ENCODE measurements at regions of chr14 and their contacts with region 1.

Region 1: GRCh38 chr14:102316743-102317563 is 2.6 kb upstream of the ZNF839 start:
- DNase-seq: peak; percentile 86 to 93
- ATAC-seq: peak; percentile 65 to 82
- H3K4me3 ChIP-seq: peak overlapping the region; percentile 51
- H3K27ac ChIP-seq: peak overlapping the region; percentile 79 to 99
- H3K4me1 ChIP-seq: peaks cover 36% of the 10 kb centered on the region
- CTCF ChIP-seq: peak; percentile 68
- EP300 ChIP-seq: no peak; a peak in 1 of 5 replicates
- POLR2A ChIP-seq: no peak; the same call in 1 of the 2 replicates
- RAD21 ChIP-seq: peak in 1 of 2 experiments; percentile 11; a peak in 2 of 5 replicates

Region 2: GRCh38 chr14:102105369-102105768 is 211.6 kb before region 1 on chr14:
- CTCF ChIA-PET with region 1: interaction called, 11 read pairs
- POLR2A ChIA-PET with region 1: no interaction called
- DNase-seq: no peak
- ATAC-seq: peak in 1 of 2 experiments; percentile 22; a peak in 2 of 6 replicates
- H3K4me3 ChIP-seq: no peak overlapping the region
- H3K27ac ChIP-seq: no peak overlapping the region
- H3K4me1 ChIP-seq: no peaks in the 10 kb centered on the region
- CTCF ChIP-seq: no peak
- EP300 ChIP-seq: no peak
- POLR2A ChIP-seq: no peak
- RAD21 ChIP-seq: no peak

Region 3: GRCh38 chr14:102227184-102227964 is 89.6 kb before region 1 on chr14:
- CTCF ChIA-PET with region 1: interaction called, 52 read pairs
- POLR2A ChIA-PET with region 1: no interaction called
- DNase-seq: no peak
- ATAC-seq: no peak
- H3K4me3 ChIP-seq: no peak overlapping the region
- H3K27ac ChIP-seq: no peak overlapping the region
- H3K4me1 ChIP-seq: no peaks in the 10 kb centered on the region
- CTCF ChIP-seq: no peak
- EP300 ChIP-seq: no peak
- POLR2A ChIP-seq: no peak
- RAD21 ChIP-seq: no peak

Region 4: DNA sequence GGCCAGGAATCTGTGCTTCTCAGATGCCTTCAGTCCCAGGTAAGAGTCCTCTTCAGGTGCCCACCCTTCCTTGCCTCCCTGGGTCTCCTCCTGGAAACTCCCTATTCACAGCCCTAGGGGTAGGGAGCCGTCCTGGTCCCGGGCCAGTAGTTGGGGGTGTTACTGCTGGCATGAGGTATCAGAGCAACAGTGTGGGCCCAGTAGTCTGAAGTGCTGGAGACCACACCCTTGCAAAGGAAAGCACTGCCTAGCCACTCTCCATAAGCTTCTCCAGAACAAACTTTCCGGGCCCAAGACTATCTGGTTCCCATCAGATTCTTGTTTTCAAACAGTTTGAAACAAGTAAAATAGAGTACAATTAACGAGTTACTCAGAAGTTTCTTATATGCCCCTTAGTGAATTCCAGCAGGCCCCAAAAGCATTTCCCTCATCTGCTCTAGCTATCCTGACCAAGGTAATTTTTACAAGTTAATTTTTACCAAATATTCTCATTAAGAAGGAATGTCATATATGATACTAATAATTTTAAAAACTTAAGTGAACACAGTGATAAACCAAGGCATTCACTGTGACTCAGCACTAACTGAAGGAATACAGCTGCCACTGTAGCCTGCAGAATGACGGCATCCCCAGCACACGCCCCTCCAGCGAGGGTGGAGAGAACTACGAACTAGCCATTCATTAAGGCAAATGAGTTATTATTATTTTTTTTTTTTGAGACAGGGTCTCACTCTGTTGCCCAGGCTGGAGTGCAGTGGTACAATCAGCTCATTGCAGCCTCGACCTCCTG is 61.4 kb before region 1 on chr14:
- CTCF ChIA-PET with region 1: interaction called, 15 read pairs
- POLR2A ChIA-PET with region 1: no interaction called
- DNase-seq: peak; percentile 37 to 58
- ATAC-seq: peak; percentile 84; a peak in 5 of 6 replicates
- H3K4me3 ChIP-seq: no peak overlapping the region
- H3K27ac ChIP-seq: peak overlapping the region; percentile 83 to 89
- H3K4me1 ChIP-seq: peaks cover 15% of the 10 kb centered on the region
- CTCF ChIP-seq: no peak
- EP300 ChIP-seq: no peak
- POLR2A ChIP-seq: no peak
- RAD21 ChIP-seq: no peak

Region 5: GRCh38 chr14:102304611-102305509 is 12.1 kb before region 1 on chr14 and contains the start of gene MOK:
- CTCF ChIA-PET with region 1: interaction called, 36 read pairs
- POLR2A ChIA-PET with region 1: interaction called, 8 read pairs
- DNase-seq: peak; percentile 96 to 98
- ATAC-seq: peak; percentile 93 to 97
- H3K4me3 ChIP-seq: peak within 1 kb of the TSS; percentile 87
- H3K27ac ChIP-seq: peak within 1 kb of the TSS; percentile 79 to 89
- H3K4me1 ChIP-seq: peaks cover 9% of the 10 kb centered on the region; the same call in 1 of the 3 replicates
- CTCF ChIP-seq: no peak
- EP300 ChIP-seq: no peak
- POLR2A ChIP-seq: no peak
- RAD21 ChIP-seq: no peak
- polyA plus RNA-seq, gene MOK: 10.4 and 12.6 TPM in 2 replicates

Measured in A549 (cell line).